GM10248 (cell line): ENCODE measurements at regions of chr9 and their contacts with region 1.

Region 1: DNA sequence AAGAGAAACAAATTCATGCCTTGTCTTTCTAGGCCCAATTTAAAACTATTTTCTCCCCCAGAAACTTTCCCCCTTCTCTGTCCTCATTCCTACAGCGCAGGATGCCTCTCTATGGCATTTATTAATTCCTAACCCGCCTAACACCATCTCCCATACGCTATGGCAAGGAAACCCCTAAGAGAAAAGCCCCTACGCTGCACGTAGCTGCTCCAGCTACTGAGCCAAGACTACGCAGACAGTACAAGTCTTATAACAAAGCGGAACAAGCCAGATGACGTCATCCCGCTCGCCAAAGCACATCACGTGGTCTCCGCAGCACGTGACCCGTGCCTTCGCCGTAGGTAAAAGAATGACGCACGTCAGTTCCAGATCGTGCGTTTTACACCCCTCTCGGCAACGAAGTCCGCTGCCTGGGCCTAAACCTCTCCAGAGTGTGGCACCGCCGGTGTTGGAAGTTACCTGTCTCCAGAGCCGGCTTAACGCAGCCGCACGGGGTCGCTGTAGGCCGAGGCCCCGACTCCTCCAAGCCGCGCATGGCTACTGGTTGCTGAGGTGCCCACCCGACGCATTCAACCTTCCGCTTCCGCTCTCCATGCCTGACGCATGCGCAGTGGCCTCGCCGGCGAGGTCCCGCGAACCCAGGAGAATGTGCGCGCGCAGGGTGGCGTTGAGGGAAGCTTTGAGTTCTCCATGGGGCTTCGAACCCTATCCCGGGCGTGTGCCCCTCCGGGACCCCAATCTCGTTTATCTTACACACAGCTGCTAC is at the start of gene TRMO:
- DNase-seq: peak; percentile 94
- CTCF ChIP-seq: peak; percentile 67

Region 2: DNA sequence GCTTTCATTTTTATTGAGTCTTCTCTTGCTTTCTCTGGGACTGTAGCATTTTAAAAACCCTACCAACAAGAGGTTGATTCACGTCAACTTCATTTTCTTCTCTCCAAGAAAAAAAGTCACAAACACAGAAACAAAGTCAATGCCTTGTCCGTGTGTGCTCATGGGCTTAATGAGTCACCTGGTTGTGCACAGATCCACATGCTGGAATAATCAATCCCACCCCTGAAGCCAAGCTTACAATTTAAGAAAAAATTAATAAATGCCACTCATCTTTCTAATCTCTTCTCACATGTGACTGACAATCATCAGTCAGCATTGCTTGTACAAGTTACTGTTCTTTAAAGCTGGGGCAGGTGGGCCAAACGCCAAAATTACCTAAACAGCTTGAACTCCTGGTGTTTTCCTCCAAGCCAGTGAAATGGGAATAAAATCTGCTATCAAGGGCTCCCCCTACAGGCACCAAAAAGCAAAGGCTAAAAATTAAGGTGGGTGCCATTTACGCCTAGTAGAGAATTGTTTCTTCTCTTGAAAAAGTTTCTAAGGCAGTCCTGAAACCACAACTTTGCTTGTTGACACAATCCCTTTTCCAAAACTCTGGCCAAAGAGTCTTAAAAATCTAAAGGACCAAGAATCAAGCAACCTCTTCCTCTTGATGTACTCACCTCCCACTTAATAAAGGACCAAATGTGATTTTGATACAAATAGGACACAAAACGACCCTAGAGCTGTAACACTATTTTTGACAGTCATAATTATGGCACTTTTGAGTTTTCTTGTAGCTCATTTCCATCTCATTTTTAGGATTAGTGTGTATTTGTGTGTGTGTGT is 21.2 kb before region 1 on chr9:
- CTCF ChIA-PET with region 1: interaction called, 69 read pairs
- POLR2A ChIA-PET with region 1: no interaction called
- DNase-seq: peak; percentile 54
- CTCF ChIP-seq: peak; percentile 77

Region 3: GRCh38 chr9:97934321-97935115 is 12.4 kb after region 1 on chr9:
- CTCF ChIA-PET with region 1: interaction called, 29 read pairs
- POLR2A ChIA-PET with region 1: no interaction called
- DNase-seq: no peak
- CTCF ChIP-seq: no peak

Region 4: DNA sequence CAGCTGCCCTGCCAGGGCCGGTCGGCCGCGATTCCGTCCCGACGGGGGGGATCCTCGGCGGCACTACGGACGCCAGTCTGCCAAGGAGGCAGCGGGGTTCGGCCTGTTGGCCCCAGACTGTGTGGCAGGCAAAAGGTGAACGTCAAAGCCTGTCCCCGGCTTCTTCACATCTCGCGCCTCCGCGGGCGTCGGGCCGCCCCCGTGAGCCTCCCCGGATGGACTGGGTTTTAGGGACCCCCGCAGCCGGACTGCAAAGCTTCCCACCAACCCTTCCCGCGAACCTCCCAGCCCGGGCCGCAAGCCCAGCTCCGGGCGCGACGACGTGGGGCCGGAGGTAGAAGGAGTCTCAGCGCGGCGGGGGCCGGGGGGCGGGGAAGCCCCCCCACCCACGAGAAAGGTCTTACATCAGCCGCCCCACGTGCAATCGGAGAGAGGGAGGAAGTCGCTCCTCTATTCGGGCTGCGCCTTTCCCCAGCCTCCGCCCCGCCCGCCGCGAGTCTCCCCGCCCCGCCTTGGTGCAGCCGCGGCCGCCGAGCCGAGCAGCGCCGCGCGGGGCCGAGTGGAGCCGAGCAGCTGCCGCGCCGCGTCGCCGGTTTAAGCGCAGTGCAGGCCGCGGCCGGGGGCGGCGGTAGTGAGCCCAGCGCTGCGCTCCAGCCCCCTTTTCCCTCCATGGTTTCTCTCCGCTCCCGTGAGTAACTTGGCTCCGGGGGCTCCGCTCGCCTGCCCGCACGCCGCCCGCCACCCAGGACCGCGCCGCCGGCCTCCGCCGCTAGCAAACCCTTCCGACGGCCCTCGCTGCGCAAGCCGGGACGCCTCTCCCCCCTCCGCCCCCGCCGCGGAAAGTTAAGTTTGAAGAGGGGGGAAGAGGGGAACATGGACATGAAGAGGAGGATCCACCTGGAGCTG is 60.8 kb after region 1 on chr9 and contains the start of gene ANP32B:
- CTCF ChIA-PET with region 1: interaction called, 22 read pairs
- POLR2A ChIA-PET with region 1: no interaction called
- DNase-seq: peak; percentile 94
- CTCF ChIP-seq: peak; percentile 92

Region 5: GRCh38 chr9:98034593-98035546 is 112.7 kb after region 1 on chr9:
- CTCF ChIA-PET with region 1: interaction called, 11 read pairs
- POLR2A ChIA-PET with region 1: no interaction called
- DNase-seq: peak; percentile 80
- CTCF ChIP-seq: peak; percentile 90

Region 6: GRCh38 chr9:98263482-98264357 is 341.6 kb after region 1 on chr9:
- CTCF ChIA-PET with region 1: interaction called, 16 read pairs
- POLR2A ChIA-PET with region 1: no interaction called
- DNase-seq: peak; percentile 80
- CTCF ChIP-seq: peak; percentile 96